H1 (cell line): ENCODE measurements at regions of chr7 and their contacts with region 1.

Region 1: GRCh38 chr7:157150882-157151281 is 12.2 kb downstream of the UBE3C start:
- DNase-seq: peak in 1 of 2 experiments; percentile 56
- H3K4me3 ChIP-seq: no peak overlapping the region
- H3K27ac ChIP-seq: no peak overlapping the region
- H3K4me1 ChIP-seq: peaks cover 4 to 10% (median 7%) of the 10 kb centered on the region in 4 experiments; a peak in 6 of 7 replicates
- H3K27me3 ChIP-seq: no peaks in the 10 kb centered on the region; a peak in 1 of 7 replicates
- CTCF ChIP-seq: no peak
- EP300 ChIP-seq: no peak
- POLR2A ChIP-seq: no peak
- RAD21 ChIP-seq: no peak

Region 2: GRCh38 chr7:157139810-157140510 is 10.9 kb before region 1 on chr7:
- CTCF ChIA-PET with region 1: interaction called, 15 read pairs
- POLR2A ChIA-PET with region 1: interaction called, 8 read pairs
- DNase-seq: peak in 1 of 2 experiments; percentile 20
- H3K4me3 ChIP-seq: peak overlapping the region; percentile 61 to 95 (median 93)
- H3K27ac ChIP-seq: peak overlapping the region; percentile 75
- H3K4me1 ChIP-seq: peaks cover 0 to 10% (median 8%) of the 10 kb centered on the region in 4 experiments; a peak in 6 of 7 replicates
- H3K27me3 ChIP-seq: no peaks in the 10 kb centered on the region
- CTCF ChIP-seq: no peak
- EP300 ChIP-seq: no peak
- POLR2A ChIP-seq: no peak
- RAD21 ChIP-seq: no peak